Colonic mucosa (tissue), 4 donors: ENCODE measurements at regions of chr10 and their contacts with region 1.

Region 1: DNA sequence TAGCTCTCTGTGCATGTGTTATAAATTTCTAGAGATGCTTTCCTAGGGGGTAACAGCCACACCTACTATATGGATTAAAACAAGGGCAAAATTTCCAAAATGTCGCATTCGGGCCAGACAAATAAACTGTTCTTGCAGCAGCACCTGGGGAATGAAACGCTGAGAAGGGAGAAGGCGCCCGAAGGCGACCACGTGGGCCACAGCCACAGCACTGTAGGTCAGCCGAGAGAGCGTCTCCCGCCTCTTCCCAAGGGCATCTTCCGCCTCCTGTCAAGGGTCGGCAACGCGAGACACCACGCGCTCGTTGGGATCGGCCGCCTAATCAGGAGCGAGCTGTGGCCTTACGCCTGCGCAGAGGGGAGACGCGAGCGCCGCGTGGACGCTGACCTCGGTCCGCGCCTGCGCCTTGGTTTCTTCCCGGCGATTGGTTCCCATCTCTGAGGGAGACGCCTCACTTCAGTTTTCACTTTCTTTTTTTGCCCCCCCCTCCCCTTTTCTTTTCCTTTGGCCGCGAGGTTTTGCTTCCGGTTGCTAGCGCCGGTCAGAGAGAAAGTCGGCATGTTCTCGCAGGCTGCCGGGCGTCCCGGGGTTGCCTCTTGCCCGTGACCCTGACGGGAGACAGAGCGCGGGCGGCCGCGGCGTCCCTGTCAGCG is at the start of gene TASOR2:
- DNase-seq: peak; percentile 99
- H3K4me3 ChIP-seq: peak within 1 kb of the TSS; percentile 98
- H3K27ac ChIP-seq: peak within 1 kb of the TSS; percentile 89
- H3K4me1 ChIP-seq: peaks cover 3% of the 10 kb centered on the region
- H3K27me3 ChIP-seq: no peaks in the 10 kb centered on the region
- CTCF ChIP-seq: no peak
- total RNA-seq, gene TASOR2: 41.4 to 57.2 TPM

Region 2: DNA sequence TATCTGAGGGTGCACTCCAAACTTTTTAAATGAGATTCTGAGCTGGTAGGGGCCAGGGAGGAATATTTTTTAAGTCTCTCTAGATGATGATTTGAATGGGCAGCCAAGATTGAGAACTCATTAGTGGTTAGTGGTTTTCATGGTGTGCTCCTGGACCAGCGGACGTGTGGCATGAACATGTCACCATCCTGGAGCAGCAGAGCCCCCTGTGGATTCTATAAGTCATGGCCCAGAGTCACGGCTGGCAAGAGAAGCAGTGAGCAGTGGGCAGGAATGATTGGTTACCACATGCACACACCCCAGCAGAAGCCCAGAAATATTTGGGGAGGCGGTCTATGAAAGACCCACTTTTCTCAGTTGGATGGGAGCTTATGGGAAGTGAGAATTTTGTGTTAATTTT is 340.9 kb before region 1 on chr10:
- intact Hi-C with region 1: no loop called
- DNase-seq: no peak
- H3K4me3 ChIP-seq: no peak overlapping the region
- H3K27ac ChIP-seq: no peak overlapping the region
- H3K4me1 ChIP-seq: no peaks in the 10 kb centered on the region
- H3K27me3 ChIP-seq: no peaks in the 10 kb centered on the region
- CTCF ChIP-seq: no peak

Region 3: DNA sequence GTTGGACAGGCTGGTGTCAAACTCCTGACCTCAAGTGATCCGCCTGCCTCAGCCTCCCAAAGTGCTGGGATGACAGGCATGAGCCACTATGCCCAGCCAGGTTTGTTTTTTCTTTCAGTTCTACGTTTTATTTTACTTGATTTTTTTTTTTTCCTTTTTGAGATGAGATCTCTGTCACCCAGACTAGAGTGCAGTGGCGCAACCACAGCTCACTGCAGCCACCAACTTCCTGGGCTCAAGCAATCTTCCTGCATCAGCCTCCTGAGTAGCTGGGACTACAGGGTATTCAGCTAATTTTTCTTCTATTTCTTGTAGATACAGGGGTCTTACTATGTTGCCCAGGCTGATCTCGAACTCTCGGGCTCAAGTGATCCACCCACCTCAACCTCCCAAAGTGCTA is 104.5 kb after region 1 on chr10:
- intact Hi-C with region 1: no loop called
- DNase-seq: no peak
- H3K4me3 ChIP-seq: no peak overlapping the region
- H3K27ac ChIP-seq: no peak overlapping the region
- H3K4me1 ChIP-seq: no peaks in the 10 kb centered on the region
- H3K27me3 ChIP-seq: no peaks in the 10 kb centered on the region
- CTCF ChIP-seq: no peak

Region 4: GRCh38 chr10:5889624-5890451 is 205.4 kb after region 1 on chr10 and contains the starts of genes ANKRD16 and FBH1:
- intact Hi-C with region 1: loop called (anchors 10 kb)
- DNase-seq: peak; percentile 99
- H3K4me3 ChIP-seq: peak within 1 kb of the TSS; percentile 97
- H3K27ac ChIP-seq: peak within 1 kb of the TSS; percentile 66
- H3K4me1 ChIP-seq: peaks cover 3% of the 10 kb centered on the region
- H3K27me3 ChIP-seq: no peaks in the 10 kb centered on the region
- CTCF ChIP-seq: no peak
- total RNA-seq, gene ANKRD16: 5.5 to 8.1 TPM
- total RNA-seq, gene FBH1: 67.7 to 87.5 TPM